ENCODE measurements at regions of chr9 and their contacts with region 1.

Region 1: GRCh38 chr9:131739980-131740648 is at the start of gene RAPGEF1:
- H3K4me3 ChIP-seq: peak within 1 kb of the TSS; percentile 51
- H3K27ac ChIP-seq: peak within 1 kb of the TSS; percentile 85
- H3K4me1 ChIP-seq: peaks cover 6% of the 10 kb centered on the region; the same call in 1 of the 2 replicates
- CTCF ChIP-seq: no peak

Region 2: DNA sequence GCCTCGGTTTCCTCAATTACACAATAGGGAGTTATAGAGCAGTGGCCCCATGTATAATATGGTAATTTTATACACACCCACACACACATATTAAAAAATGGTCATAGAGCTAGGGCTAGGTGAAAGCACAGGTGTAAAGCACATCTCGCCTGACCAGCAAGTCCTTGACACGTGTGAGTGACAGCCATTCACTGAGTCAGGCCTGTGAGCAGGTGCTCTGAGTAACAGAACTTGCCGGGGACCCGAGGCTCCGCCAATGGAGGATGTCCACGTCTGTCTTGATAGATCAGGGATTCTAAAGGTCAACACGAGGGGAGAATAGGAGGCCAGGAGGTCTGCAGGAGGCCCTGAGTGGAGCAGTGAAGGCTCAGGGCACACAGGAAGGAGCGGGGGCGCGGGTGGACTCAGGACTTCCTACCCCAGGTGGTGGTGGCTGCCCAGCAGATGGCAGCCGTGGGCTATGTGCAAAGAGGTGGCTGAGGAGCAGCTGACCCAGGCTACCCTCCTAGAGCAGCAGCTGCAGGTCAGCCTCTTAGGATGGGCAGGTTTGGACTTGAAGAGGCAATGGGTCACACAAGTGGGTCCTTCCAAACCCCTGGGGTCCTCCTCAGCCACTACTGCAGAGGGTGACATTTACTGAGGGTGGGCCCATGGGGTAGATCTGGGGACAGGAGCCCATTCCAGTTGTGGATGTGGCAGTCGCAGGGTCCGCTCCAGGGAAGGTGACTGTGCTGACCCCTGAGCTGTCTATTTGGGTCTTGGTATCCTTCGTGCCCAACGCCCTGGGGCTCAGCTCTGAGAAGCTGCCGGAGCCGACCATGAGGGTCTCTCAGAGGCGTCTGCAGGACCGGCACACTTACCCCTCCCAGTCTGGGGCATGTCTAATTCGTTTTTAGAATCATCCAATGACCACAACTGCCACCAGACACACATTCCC is 148.9 kb before region 1 on chr9:
- CTCF ChIA-PET with region 1: interaction called, 193 read pairs
- POLR2A ChIA-PET with region 1: interaction called, 3 read pairs
- H3K4me3 ChIP-seq: no peak overlapping the region
- H3K27ac ChIP-seq: no peak overlapping the region
- H3K4me1 ChIP-seq: no peaks in the 10 kb centered on the region
- CTCF ChIP-seq: peak; percentile 88

Region 3: GRCh38 chr9:131608493-131609037 is 131.5 kb before region 1 on chr9:
- CTCF ChIA-PET with region 1: interaction called, 14 read pairs
- POLR2A ChIA-PET with region 1: interaction called, 3 read pairs
- H3K4me3 ChIP-seq: no peak overlapping the region
- H3K27ac ChIP-seq: no peak overlapping the region
- H3K4me1 ChIP-seq: no peaks in the 10 kb centered on the region
- CTCF ChIP-seq: no peak

Region 4: DNA sequence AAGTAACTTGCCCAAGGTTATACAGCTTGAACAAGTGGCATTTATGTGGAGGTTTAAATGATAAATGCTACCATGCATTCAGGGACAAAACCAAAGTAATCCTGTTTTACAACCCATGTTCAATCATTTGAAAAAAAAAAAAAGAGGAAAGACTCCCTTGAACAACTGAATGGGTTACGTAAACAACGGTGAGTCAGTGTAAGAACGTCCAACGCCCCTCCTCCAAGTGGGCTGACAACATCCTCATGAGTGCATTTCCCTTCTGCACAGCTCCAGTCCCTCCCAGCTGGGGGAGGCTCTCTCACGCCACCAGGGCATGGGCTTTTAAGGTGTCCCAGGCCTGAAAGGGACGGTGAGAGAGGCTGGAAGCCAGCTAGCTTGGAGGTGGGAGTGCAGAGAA is 104.8 kb before region 1 on chr9:
- CTCF ChIA-PET with region 1: interaction called, 31 read pairs
- POLR2A ChIA-PET with region 1: no interaction called
- H3K4me3 ChIP-seq: no peak overlapping the region
- H3K27ac ChIP-seq: no peak overlapping the region
- H3K4me1 ChIP-seq: peaks cover 3% of the 10 kb centered on the region; the same call in 1 of the 2 replicates
- CTCF ChIP-seq: no peak

Region 5: DNA sequence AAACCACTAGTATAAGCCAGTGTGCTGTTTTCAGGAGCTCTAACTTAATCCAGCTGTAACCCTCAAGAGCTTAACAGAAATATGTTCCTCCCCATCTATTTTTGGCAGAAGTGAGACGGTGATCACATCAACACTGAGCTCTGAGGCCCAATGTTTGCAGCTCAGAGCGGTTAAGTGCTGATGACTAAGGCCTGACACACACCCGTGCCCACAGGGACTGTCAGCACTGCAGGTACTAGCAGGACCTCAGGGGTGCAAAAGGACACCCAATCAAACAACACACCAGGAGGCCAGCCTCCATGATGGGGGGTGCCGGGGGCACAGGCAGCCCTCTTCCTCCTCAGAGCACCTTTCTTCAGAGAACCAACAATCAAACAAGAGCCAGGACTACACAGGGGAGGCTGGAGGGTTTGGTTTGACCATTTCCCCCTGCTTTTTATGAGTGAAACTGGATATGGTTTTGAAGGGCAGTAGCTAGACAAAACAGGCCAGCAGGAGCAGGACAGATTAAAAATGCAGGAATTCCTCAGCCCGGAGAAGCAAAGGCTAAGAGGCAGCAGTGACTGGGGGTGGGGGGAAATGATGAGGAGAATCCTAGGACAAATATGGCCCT is 61.5 kb before region 1 on chr9:
- CTCF ChIA-PET with region 1: interaction called, 22 read pairs
- POLR2A ChIA-PET with region 1: interaction called, 5 read pairs
- H3K4me3 ChIP-seq: no peak overlapping the region
- H3K27ac ChIP-seq: peak overlapping the region; percentile 27
- H3K4me1 ChIP-seq: peaks cover 29% of the 10 kb centered on the region
- CTCF ChIP-seq: no peak

Region 6: DNA sequence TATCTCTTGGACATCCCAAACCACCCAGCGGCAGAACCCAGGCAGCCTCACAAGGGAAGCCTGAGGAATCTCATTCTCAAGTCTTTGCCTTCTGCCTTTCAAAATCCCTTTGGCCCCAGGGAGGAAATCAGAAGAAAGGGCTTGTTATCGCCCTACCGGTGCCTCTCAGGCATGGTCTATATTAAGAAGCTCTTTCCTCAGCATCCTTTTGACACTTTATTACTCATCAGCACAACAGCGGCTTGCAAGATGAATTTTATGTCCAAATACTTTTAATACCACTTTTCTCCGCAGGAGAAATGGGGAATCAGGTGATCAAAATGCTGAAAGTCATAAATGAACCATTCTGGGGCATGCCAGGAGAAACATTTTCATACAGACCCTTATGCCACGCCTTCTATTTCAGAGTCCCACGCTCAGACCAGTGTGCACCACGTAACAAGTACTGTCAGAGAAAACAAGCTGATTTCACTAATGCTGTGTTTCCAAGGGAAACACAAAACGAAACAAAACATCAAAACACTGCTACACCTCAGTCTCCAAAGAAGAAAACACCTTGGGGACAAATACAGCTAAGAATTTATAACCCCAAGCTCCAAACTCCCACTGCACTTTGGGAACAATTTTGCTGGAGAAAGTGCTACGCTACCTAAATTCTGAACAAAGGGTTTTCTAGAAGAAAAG is 30.2 kb before region 1 on chr9:
- CTCF ChIA-PET with region 1: interaction called, 19 read pairs
- POLR2A ChIA-PET with region 1: no interaction called
- H3K4me3 ChIP-seq: no peak overlapping the region
- H3K27ac ChIP-seq: no peak overlapping the region
- H3K4me1 ChIP-seq: peaks cover 3% of the 10 kb centered on the region; the same call in 1 of the 2 replicates
- CTCF ChIP-seq: no peak

Region 7: GRCh38 chr9:131788341-131788740 is 48.2 kb after region 1 on chr9:
- CTCF ChIA-PET with region 1: no interaction called
- POLR2A ChIA-PET with region 1: no interaction called
- H3K4me3 ChIP-seq: no peak overlapping the region
- H3K27ac ChIP-seq: no peak overlapping the region
- H3K4me1 ChIP-seq: no peaks in the 10 kb centered on the region
- CTCF ChIP-seq: no peak

Measured in HEK293 (cell line).